Right cardiac atrium (tissue), 5 donors: ENCODE measurements at regions of chr4 and their contacts with region 1.

Region 1: GRCh38 chr4:17347445-17347844 is 164.4 kb downstream of the QDPR start:
- DNase-seq: no peak
- ATAC-seq: peak; percentile 45 to 66
- H3K4me3 ChIP-seq: no peak overlapping the region
- H3K27ac ChIP-seq: no peak overlapping the region
- H3K4me1 ChIP-seq: no peaks in the 10 kb centered on the region
- H3K27me3 ChIP-seq: no peaks in the 10 kb centered on the region

Region 2: DNA sequence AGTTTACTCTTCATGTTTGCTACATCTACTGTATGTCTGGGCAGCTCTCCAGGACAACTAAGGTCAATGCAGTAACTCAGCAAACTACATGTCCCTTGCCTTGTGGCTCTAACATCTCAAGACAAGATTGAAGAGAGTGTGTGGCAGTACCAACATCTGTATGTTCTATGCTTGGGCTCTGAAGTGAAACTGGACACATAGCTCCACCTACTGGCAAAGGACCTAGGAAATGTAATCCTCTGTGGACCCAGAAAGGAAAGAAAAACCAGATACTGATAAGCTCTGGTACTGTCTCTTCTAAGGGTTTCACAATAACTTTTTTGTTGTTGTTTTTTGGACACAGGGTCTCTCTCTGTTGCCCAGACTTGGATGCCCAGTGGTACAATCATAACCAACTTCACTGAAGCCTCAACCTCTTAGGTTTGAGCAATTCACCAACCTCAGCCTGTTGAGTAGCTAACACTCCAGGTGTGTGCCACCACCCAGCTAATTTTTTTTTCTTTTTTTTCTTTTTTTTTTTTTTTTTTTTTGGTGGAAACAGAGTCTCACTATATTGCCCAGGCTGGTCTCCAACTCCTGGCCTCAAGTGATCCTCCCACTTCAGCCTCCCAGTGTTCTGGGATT is 100.3 kb after region 1 on chr4:
- intact Hi-C with region 1: loop called in 1 of 4 experiments (anchors 10 kb)
- DNase-seq: no peak
- ATAC-seq: peak; percentile 93 to 95
- H3K4me3 ChIP-seq: no peak overlapping the region
- H3K27ac ChIP-seq: no peak overlapping the region
- H3K4me1 ChIP-seq: no peaks in the 10 kb centered on the region
- H3K27me3 ChIP-seq: no peaks in the 10 kb centered on the region

Region 3: DNA sequence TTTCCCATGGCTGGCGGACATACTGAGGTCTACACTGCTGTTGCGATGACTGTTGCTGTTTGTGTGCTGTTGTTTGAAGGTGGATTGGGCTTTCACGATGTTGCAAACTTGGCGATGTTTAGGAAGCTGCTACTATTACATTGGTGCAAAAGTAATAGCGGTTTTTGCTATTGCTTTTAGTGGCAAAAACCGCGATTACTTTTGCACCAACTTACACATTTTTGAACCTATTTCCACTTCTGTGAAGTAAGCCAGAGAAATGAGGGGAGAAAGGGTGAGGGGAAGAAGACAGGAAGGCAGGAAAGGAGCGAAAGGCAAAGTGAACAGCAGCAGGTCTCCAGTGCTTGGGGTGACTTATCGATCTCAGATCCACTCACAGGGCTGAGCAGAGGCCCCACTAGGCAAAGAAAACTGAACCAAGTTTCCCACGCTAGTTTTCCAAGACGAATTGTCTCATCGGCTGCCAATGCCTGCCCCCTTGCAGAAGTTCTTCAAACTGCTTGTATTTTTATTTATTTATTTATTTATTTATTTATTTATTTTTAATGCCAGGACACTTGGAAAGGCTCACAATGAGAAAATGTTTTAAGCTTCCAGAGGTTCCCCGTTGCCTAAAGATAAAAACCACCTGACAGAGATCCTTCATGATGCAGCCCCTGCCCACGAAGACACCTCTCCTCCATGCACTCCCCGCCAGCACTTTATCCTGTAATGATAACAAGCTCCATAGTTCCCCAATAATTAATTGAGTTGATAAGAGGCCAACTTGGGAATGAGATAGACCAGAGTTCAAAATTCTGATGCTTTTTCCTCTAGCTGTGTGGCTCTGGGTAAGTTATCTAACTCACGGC is 121.2 kb after region 1 on chr4:
- intact Hi-C with region 1: loop called in 2 of 4 experiments (anchors 5 to 10 kb)
- DNase-seq: no peak
- ATAC-seq: no peak
- H3K4me3 ChIP-seq: no peak overlapping the region
- H3K27ac ChIP-seq: no peak overlapping the region
- H3K4me1 ChIP-seq: peaks cover 1% of the 10 kb centered on the region
- H3K27me3 ChIP-seq: no peaks in the 10 kb centered on the region

Region 4: GRCh38 chr4:17614416-17615299 is 267.2 kb after region 1 on chr4 and contains the start of gene MED28:
- intact Hi-C with region 1: no loop called
- DNase-seq: peak; percentile 96 to 98 (median 98)
- ATAC-seq: peak; percentile 96 to 98
- H3K4me3 ChIP-seq: peak within 1 kb of the TSS; percentile 89
- H3K27ac ChIP-seq: peak within 1 kb of the TSS; percentile 94
- H3K4me1 ChIP-seq: peaks cover 10% of the 10 kb centered on the region
- H3K27me3 ChIP-seq: no peaks in the 10 kb centered on the region
- total RNA-seq, gene MED28: 22.1 to 34.3 (median 29.1) TPM